WTC11 (cell line): ENCODE measurements at regions of chr3 and their contacts with region 1.

Region 1: DNA sequence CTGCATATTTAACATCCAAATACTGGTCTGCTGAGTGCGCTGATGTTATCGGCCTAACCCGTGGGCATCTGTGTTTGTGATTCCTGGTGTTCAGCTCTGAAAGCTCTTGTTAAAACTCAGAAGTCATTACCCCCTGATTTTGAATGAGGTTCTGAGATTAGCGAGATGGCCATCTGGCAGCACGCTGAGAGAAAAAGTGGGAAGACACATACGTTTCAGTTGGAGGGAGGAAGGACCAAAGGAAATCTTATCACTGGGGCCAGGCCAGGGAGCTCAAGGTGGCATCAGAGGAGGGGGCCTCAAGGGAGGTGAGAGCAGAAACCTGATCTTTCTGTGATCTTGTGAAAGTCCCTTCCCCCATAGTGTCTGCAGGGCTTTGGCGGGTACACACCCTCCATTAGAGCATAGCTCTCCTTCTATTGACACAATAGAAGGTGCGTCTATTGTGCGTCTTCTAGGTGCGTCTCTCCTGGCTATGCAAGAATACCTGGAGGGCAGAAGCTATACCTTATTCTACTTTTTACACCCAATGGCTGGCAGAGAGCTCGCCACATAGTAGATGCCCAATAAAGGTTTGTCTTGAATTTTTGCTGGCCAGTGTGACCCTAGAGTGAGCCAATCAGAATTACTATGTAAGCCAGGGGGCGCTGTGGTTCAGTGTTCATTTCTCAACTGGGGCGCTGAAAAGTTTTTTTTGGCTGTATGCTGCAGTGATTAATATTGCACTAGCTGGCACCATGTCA is 182.4 kb downstream of the SHQ1 start:
- DNase-seq: peak; percentile 65
- ATAC-seq: peak; percentile 82
- H3K4me3 Mint-ChIP-seq: no peak overlapping the region
- H3K27ac Mint-ChIP-seq: no peak overlapping the region
- H3K4me1 Mint-ChIP-seq: peaks cover 7% of the 10 kb centered on the region
- H3K27me3 Mint-ChIP-seq: no peaks in the 10 kb centered on the region
- CTCF ChIP-seq: peak; percentile 79

Region 2: DNA sequence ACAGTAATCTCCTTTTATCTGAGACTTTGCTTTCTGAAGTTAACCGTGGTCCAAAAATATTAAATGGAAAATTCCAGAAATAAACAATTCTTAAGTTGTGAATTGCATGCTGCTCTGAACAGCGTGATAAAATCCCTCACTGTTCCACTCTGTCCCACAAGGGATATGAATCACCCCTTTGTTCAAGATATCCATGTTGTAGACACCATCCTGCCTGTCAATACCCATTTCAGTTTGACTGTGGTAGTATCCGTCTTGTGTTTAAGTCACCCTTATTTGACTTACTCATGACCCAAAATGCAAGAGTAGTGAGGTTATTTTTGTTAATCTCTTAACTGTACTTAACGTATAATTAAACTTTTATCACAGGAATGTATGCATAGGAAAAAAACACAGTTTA is 252.6 kb before region 1 on chr3:
- CTCF ChIA-PET with region 1: no interaction called
- POLR2A ChIA-PET with region 1: no interaction called
- DNase-seq: no peak
- ATAC-seq: no peak
- H3K4me3 Mint-ChIP-seq: no peak overlapping the region
- H3K27ac Mint-ChIP-seq: 0 out of 2 replicates have a peak overlapping the region, but pooled peaks have one; percentile 6
- H3K4me1 Mint-ChIP-seq: peaks cover 76% of the 10 kb centered on the region
- H3K27me3 Mint-ChIP-seq: no peaks in the 10 kb centered on the region
- CTCF ChIP-seq: no peak

Region 3: GRCh38 chr3:72597756-72598195 is 68.1 kb before region 1 on chr3:
- CTCF ChIA-PET with region 1: no interaction called
- POLR2A ChIA-PET with region 1: no interaction called
- DNase-seq: no peak
- ATAC-seq: peak; percentile 63
- H3K4me3 Mint-ChIP-seq: peak overlapping the region; percentile 9; the same call in 1 of the 2 replicates
- H3K27ac Mint-ChIP-seq: no peak overlapping the region
- H3K4me1 Mint-ChIP-seq: peaks cover 28% of the 10 kb centered on the region
- H3K27me3 Mint-ChIP-seq: peaks cover 3% of the 10 kb centered on the region; the same call in 1 of the 2 replicates
- CTCF ChIP-seq: no peak

Region 4: GRCh38 chr3:72655131-72655551 is 10.7 kb before region 1 on chr3:
- CTCF ChIA-PET with region 1: interaction called, 27 read pairs
- POLR2A ChIA-PET with region 1: no interaction called
- DNase-seq: peak; percentile 77
- ATAC-seq: peak; percentile 89
- H3K4me3 Mint-ChIP-seq: peak overlapping the region; percentile 45
- H3K27ac Mint-ChIP-seq: no peak overlapping the region
- H3K4me1 Mint-ChIP-seq: peaks cover 14% of the 10 kb centered on the region
- H3K27me3 Mint-ChIP-seq: no peaks in the 10 kb centered on the region
- CTCF ChIP-seq: no peak

Region 5: DNA sequence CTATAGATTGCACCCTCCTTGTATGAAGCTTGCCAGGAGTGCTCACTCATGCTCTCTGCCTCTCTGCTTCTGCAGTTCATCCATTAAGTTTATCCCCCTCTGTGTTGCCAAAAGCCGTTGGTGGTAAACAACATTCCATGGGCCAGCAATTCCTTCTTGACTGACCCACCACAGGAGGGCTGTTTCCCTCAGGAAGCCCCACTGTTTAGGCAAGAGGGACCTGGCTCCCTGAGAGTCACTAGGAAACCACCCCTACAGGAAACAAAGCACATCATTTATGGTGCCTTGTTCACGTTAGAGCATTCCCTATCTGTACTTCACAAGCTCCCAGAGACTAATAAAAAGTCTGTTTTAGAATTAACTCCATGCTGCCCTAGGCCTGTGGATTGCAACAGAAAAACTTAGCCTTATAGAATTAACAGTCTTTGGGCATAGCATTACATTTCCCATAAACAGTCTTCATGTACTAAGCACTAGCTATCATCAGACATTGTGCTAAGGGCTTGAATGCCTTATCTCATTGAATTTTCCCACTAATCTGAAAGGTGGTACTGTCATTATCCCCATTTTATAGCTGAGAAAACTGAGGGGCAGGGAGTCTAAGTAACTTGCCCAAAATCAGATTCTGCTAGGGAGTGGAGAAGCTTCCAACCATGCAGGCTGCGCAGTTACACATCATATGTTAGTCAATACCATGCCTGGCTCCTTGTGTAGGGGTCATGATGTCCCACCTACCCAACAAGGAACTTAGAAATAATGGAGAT is 32.5 kb after region 1 on chr3:
- CTCF ChIA-PET with region 1: interaction called, 21 read pairs
- POLR2A ChIA-PET with region 1: no interaction called
- DNase-seq: peak; percentile 27
- ATAC-seq: peak; percentile 74
- H3K4me3 Mint-ChIP-seq: no peak overlapping the region; the same call in 1 of the 2 replicates
- H3K27ac Mint-ChIP-seq: peak overlapping the region; percentile 75
- H3K4me1 Mint-ChIP-seq: peaks cover 27% of the 10 kb centered on the region
- H3K27me3 Mint-ChIP-seq: no peaks in the 10 kb centered on the region
- CTCF ChIP-seq: no peak

Region 6: GRCh38 chr3:72738752-72739530 is 73.1 kb after region 1 on chr3:
- CTCF ChIA-PET with region 1: interaction called, 14 read pairs
- POLR2A ChIA-PET with region 1: no interaction called
- DNase-seq: peak; percentile 69
- ATAC-seq: peak; percentile 95
- H3K4me3 Mint-ChIP-seq: peak overlapping the region; percentile 76
- H3K27ac Mint-ChIP-seq: no peak overlapping the region
- H3K4me1 Mint-ChIP-seq: peaks cover 22% of the 10 kb centered on the region
- H3K27me3 Mint-ChIP-seq: peaks cover 30% of the 10 kb centered on the region
- CTCF ChIP-seq: no peak

Region 7: GRCh38 chr3:72811551-72811950 is 145.7 kb after region 1 on chr3:
- CTCF ChIA-PET with region 1: interaction called, 26 read pairs
- POLR2A ChIA-PET with region 1: no interaction called
- DNase-seq: no peak
- ATAC-seq: peak; percentile 70
- H3K4me3 Mint-ChIP-seq: peak overlapping the region; percentile 8; the same call in 1 of the 2 replicates
- H3K27ac Mint-ChIP-seq: peak overlapping the region; percentile 90
- H3K4me1 Mint-ChIP-seq: peaks cover 52% of the 10 kb centered on the region
- H3K27me3 Mint-ChIP-seq: no peaks in the 10 kb centered on the region
- CTCF ChIP-seq: no peak

Region 8: GRCh38 chr3:72821161-72821781 is 155.4 kb after region 1 on chr3:
- CTCF ChIA-PET with region 1: interaction called, 35 read pairs
- POLR2A ChIA-PET with region 1: interaction called, 4 read pairs
- DNase-seq: no peak
- ATAC-seq: no peak
- H3K4me3 Mint-ChIP-seq: no peak overlapping the region
- H3K27ac Mint-ChIP-seq: no peak overlapping the region
- H3K4me1 Mint-ChIP-seq: peaks cover 5% of the 10 kb centered on the region
- H3K27me3 Mint-ChIP-seq: no peaks in the 10 kb centered on the region
- CTCF ChIP-seq: no peak